ENCODE measurements at regions of chr10 and their contacts with region 1.

Region 1: DNA sequence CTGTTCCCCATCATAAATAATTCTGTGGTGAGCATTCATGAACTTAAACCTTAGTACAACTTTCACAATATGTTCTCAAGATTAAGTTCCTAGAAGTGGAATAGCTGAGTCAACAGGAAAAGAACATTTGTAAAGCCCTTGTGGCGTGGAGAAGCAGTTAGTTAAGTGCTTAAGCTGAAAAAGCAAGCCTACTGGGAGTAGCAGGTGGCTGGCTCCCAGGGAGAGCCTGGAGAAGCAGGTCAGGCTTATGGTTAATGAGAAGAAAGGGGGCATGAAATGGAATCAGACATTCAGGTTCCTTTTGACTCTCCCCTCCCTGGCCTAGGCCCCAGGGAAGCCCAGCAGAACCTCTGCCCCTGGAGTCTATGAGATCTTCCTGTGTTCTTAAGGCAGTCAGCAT is 35.3 kb downstream of the VSTM4 start:
- DNase-seq: peak in 4 of 5 donors; percentile 39 to 68 (median 62)
- H3K4me3 ChIP-seq: no peak overlapping the region
- H3K27ac ChIP-seq: peak overlapping the region; percentile 43 to 47
- H3K4me1 ChIP-seq: peaks cover 39% of the 10 kb centered on the region
- H3K27me3 ChIP-seq: no peaks in the 10 kb centered on the region
- CTCF ChIP-seq: no peak
- EP300 ChIP-seq: no peak
- POLR2A ChIP-seq: no peak

Region 2: GRCh38 chr10:49009199-49009979 is 70.7 kb before region 1 on chr10:
- intact Hi-C with region 1: loop called in 2 of 4 experiments (anchors 5 kb)
- DNase-seq: no peak
- H3K4me3 ChIP-seq: no peak overlapping the region
- H3K27ac ChIP-seq: no peak overlapping the region
- H3K4me1 ChIP-seq: peaks cover 38% of the 10 kb centered on the region
- H3K27me3 ChIP-seq: no peaks in the 10 kb centered on the region
- CTCF ChIP-seq: no peak
- EP300 ChIP-seq: no peak
- POLR2A ChIP-seq: no peak

Region 3: GRCh38 chr10:49115015-49115795 is 35.1 kb after region 1 on chr10 and contains the start of gene VSTM4:
- intact Hi-C with region 1: loop called in 1 of 4 experiments (anchors 5 kb)
- DNase-seq: peak; percentile 56 to 81 (median 74)
- H3K4me3 ChIP-seq: peak within 1 kb of the TSS; percentile 66
- H3K27ac ChIP-seq: peak within 1 kb of the TSS; percentile 89 to 90
- H3K4me1 ChIP-seq: peaks cover 27% of the 10 kb centered on the region
- H3K27me3 ChIP-seq: no peaks in the 10 kb centered on the region
- CTCF ChIP-seq: peak in 1 of 3 donors; percentile 15
- EP300 ChIP-seq: no peak
- POLR2A ChIP-seq: no peak
- total RNA-seq, gene VSTM4: 17.3 to 68.9 (median 42.9) TPM

Region 4: GRCh38 chr10:49299816-49300139 is 219.7 kb after region 1 on chr10:
- intact Hi-C with region 1: loop called in 1 of 4 experiments (anchors 5 kb)
- DNase-seq: no peak
- H3K4me3 ChIP-seq: no peak overlapping the region
- H3K27ac ChIP-seq: no peak overlapping the region
- H3K4me1 ChIP-seq: no peaks in the 10 kb centered on the region
- H3K27me3 ChIP-seq: no peaks in the 10 kb centered on the region
- CTCF ChIP-seq: no peak
- EP300 ChIP-seq: no peak
- POLR2A ChIP-seq: no peak

Region 5: GRCh38 chr10:50624866-50625692 is 1545.0 kb after region 1 on chr10:
- intact Hi-C with region 1: loop called in 1 of 4 experiments (anchors 5 kb)
- DNase-seq: peak in 1 of 5 donors; percentile 67
- H3K4me3 ChIP-seq: peak overlapping the region; percentile 67
- H3K27ac ChIP-seq: peak overlapping the region; percentile 95 to 100
- H3K4me1 ChIP-seq: no peaks in the 10 kb centered on the region
- H3K27me3 ChIP-seq: no peaks in the 10 kb centered on the region
- CTCF ChIP-seq: peak; percentile 64 to 76 (median 67)
- EP300 ChIP-seq: no peak
- POLR2A ChIP-seq: peak; percentile 8

Measured in ovary (tissue), 10 donors.